H1 (cell line): ENCODE measurements at regions of chr3 and their contacts with region 1.

Region 1: DNA sequence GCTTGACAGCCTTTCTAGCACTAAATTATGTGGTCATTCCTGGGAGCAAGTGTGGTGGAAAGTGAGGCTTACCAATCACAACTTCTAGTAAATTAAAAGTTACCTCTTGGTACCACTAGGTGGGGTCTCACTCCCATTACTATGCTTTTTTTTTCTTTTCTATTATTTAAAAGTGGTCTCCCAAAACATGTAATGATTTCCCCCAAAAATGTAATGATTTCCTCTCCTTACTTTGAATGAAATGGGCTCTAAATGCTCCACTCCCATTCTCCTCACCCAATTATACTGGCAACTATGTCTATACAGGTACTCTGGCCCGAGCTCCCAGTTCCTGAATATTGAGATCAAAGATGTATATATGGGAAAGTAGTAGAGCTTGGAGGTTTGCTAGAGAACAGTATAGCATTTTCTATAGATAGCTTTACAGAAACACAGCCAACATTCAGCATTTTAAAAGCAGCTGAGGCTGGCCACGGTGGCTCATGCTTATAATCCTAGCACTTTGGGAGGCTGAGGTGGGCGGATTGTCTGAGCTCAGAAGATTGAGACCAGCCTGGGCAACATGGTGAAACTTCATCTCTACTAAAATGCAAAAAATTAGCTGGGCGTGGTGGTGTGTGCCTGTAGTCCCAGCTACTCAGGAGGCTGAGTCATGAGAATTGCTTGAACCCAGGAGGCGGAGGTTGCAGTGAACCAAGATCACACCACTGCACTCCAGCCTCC is 70.9 kb downstream of the DCUN1D1 start:
- DNase-seq: no peak
- H3K4me3 ChIP-seq: no peak overlapping the region
- H3K27ac ChIP-seq: no peak overlapping the region
- H3K4me1 ChIP-seq: peaks cover 0 to 2% (median 1%) of the 10 kb centered on the region in 4 experiments; a peak in 2 of 7 replicates
- H3K27me3 ChIP-seq: no peaks in the 10 kb centered on the region
- CTCF ChIP-seq: peak in 2 of 3 experiments; percentile 37 to 51; a peak in 2 of 4 replicates
- EP300 ChIP-seq: no peak
- POLR2A ChIP-seq: no peak
- RAD21 ChIP-seq: peak; percentile 61 to 62

Region 2: GRCh38 chr3:182766099-182766498 is 143.4 kb before region 1 on chr3:
- CTCF ChIA-PET with region 1: no interaction called
- POLR2A ChIA-PET with region 1: no interaction called
- DNase-seq: no peak
- H3K4me3 ChIP-seq: no peak overlapping the region
- H3K27ac ChIP-seq: no peak overlapping the region
- H3K4me1 ChIP-seq: no peaks in the 10 kb centered on the region
- H3K27me3 ChIP-seq: no peaks in the 10 kb centered on the region
- CTCF ChIP-seq: no peak
- EP300 ChIP-seq: no peak
- POLR2A ChIP-seq: no peak
- RAD21 ChIP-seq: no peak

Region 3: DNA sequence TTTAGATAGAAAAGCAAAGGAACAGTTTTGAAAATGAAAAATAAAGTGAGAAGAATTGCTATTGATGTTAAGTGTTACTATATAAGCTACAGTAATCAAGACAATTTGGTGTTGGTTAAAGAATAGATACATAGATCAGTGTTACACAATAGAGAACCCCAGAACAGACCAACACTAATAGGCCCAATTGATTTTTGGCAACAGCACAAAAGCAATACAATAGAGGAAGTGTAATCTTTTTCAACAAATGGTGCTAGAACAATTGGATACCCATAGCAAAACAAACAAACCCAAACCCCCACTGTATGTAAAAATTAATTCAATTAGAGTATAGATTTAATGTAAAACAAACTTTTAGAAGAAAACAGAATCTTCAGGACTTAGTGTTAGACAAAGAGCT is 54.4 kb before region 1 on chr3:
- CTCF ChIA-PET with region 1: no interaction called
- POLR2A ChIA-PET with region 1: no interaction called
- DNase-seq: no peak
- H3K4me3 ChIP-seq: no peak overlapping the region
- H3K27ac ChIP-seq: no peak overlapping the region
- H3K4me1 ChIP-seq: no peaks in the 10 kb centered on the region
- H3K27me3 ChIP-seq: no peaks in the 10 kb centered on the region
- CTCF ChIP-seq: no peak
- EP300 ChIP-seq: no peak
- POLR2A ChIP-seq: no peak
- RAD21 ChIP-seq: no peak

Region 4: GRCh38 chr3:182919866-182920357 is 10.4 kb after region 1 on chr3:
- CTCF ChIA-PET with region 1: interaction called, 27 read pairs
- POLR2A ChIA-PET with region 1: no interaction called
- DNase-seq: no peak
- H3K4me3 ChIP-seq: no peak overlapping the region
- H3K27ac ChIP-seq: no peak overlapping the region
- H3K4me1 ChIP-seq: peaks cover 0 to 6% (median 3%) of the 10 kb centered on the region in 4 experiments; a peak in 5 of 7 replicates
- H3K27me3 ChIP-seq: no peaks in the 10 kb centered on the region
- CTCF ChIP-seq: no peak
- EP300 ChIP-seq: no peak
- POLR2A ChIP-seq: no peak
- RAD21 ChIP-seq: no peak